Dorsolateral prefrontal cortex (tissue), 120 donors: ENCODE measurements at regions of chrX and their contacts with region 1.

Region 1: DNA sequence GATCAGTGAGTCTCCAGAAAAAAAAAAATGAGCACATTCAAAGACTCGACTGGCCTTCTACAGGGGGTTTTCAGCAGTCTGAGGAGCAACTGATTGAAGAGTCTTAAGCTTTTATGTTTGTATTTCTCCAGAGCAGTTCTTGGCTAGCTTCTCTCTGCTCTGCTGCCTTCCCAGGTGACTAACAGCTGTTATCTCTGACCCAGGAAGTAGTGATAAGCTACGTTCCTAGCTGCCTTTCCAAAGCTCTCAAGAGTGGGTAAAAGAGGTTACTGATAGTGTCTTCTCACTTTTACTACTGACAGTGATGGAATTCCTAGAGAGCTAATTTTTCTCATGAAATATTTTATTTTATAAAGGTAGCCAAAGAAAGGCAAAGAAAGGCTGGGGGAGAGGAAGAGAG is 66.6 kb downstream of the ENOX2 start:
- DNase-seq: no peak
- H3K4me3 ChIP-seq: no peak overlapping the region
- H3K27ac ChIP-seq: no peak overlapping the region
- H3K27me3 ChIP-seq: peaks cover 0 to 59% (median 10%) of the 10 kb centered on the region in 45 donors
- CTCF ChIP-seq: no peak

Region 2: DNA sequence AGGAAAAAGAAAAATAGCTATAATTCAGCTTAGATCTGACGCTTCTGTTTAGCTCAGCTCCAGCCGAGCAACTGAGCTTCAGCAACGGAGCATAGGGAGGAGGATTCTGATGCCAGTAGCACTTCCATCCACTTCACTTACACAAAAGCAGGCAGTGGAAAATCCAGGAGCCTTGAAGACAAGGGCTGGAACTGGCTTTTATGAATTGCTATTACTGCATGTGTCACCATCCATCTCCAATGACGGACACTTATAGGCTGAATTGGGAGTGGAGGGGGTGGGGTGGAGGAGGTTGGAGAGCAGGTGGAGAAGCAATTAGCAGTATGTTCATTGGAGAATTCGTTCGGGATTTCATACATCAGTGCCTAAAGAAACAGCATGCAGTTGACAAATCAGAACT is 50.9 kb after region 1 on chrX:
- intact Hi-C with region 1: loop called in 1 of 2 experiments (anchors 10 kb)
- DNase-seq: no peak
- H3K4me3 ChIP-seq: peak overlapping the region in 47 of 59 donors; percentile 1 to 53 (median 33)
- H3K27ac ChIP-seq: peak overlapping the region in 7 of 59 donors; percentile 7 to 49 (median 21)
- H3K27me3 ChIP-seq: peaks cover 0 to 55% (median 10%) of the 10 kb centered on the region in 45 donors
- CTCF ChIP-seq: no peak